ENCODE measurements at regions of chr1 and their contacts with region 1.

Region 1: GRCh38 chr1:16366722-16367257 is at the start of gene SZRD1:
- DNase-seq: peak; percentile 96 to 98 (median 97)
- ATAC-seq: peak; percentile 90 to 95 (median 93)
- H3K4me3 ChIP-seq: peak within 1 kb of the TSS; percentile 46 to 98 (median 80)
- H3K27ac ChIP-seq: peak within 1 kb of the TSS; percentile 83 to 100 (median 97)
- H3K4me1 ChIP-seq: peaks cover 0 to 67% (median 23%) of the 10 kb centered on the region in 12 donors
- H3K27me3 ChIP-seq: no peaks in the 10 kb centered on the region
- CTCF ChIP-seq: no peak
- POLR2A ChIP-seq: no peak
- total RNA-seq, gene SZRD1: 57.4 to 130 (median 94.4) TPM

Region 2: DNA sequence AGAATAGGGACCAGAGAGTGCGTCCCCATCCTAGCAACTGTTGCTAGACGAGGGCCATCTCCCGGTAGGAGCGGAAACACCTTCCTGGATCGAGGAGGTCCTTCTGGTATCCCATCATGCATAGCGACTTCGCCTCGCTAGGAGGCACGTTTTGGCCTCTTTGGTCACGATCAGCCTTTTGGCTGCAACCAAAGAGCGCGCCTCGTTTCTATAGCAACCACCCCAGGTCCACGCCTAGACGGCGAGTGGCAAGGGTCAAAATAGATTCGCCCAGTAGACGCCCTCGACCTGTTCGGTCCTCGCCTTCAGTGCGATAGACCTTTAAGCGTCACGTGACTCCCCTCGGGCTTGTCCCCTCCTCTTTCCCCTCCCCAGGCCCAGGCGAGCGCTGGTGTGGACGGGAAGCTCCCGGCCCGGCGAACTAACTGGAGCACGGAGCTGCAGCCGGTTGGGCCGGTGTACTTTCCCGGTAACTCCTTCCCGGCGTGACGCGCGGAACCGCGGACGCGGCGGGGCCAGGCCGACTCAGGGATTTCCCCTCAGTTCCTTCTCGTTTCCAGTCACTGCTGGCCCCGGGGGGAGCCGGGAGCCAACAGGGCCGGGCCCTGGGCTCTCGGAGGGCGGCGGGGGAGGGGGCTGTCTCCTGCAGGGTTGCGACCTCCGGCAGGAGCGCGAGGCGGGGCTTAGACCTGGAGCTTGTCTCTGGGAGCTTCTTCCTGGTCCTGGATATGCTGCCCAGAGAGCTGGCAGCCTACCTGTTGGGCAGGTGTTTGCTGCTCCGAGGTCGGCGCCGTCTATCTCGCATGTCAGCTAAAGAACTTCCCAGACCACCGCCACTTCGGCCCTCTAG is 840.1 kb before region 1 on chr1 and contains the start of gene DNAJC16:
- intact Hi-C with region 1: loop called in 1 of 10 experiments (anchors 5 kb)
- DNase-seq: peak; percentile 98 to 100 (median 100)
- ATAC-seq: peak; percentile 68 to 77 (median 73)
- H3K4me3 ChIP-seq: peak within 1 kb of the TSS; percentile 64 to 100 (median 76)
- H3K27ac ChIP-seq: peak within 1 kb of the TSS; percentile 68 to 99 (median 96)
- H3K4me1 ChIP-seq: peaks cover 8 to 43% (median 29%) of the 10 kb centered on the region in 12 donors
- H3K27me3 ChIP-seq: no peaks in the 10 kb centered on the region
- CTCF ChIP-seq: peak in 6 of 12 donors; percentile 6 to 45 (median 30)
- POLR2A ChIP-seq: peak in 1 of 2 donors; percentile 74
- total RNA-seq, gene DNAJC16: 11.9 to 22.8 (median 19.1) TPM

Region 3: GRCh38 chr1:16206547-16207317 is 160.1 kb before region 1 on chr1:
- intact Hi-C with region 1: loop called in 5 of 10 experiments (anchors 5 to 10 kb)
- DNase-seq: peak; percentile 97 to 99 (median 98)
- ATAC-seq: peak; percentile 93 to 97 (median 96)
- H3K4me3 ChIP-seq: peak overlapping the region; percentile 30 to 67 (median 63)
- H3K27ac ChIP-seq: peak overlapping the region; percentile 64 to 98 (median 93)
- H3K4me1 ChIP-seq: peaks cover 0 to 23% (median 13%) of the 10 kb centered on the region in 12 donors
- H3K27me3 ChIP-seq: no peaks in the 10 kb centered on the region
- CTCF ChIP-seq: no peak
- POLR2A ChIP-seq: peak in 1 of 2 donors; percentile 64

Region 4: GRCh38 chr1:16318555-16318954 is 48.2 kb before region 1 on chr1:
- intact Hi-C with region 1: no loop called
- DNase-seq: peak in 4 of 5 donors; percentile 18 to 55 (median 38)
- ATAC-seq: peak; percentile 48 to 91 (median 74)
- H3K4me3 ChIP-seq: no peak overlapping the region
- H3K27ac ChIP-seq: peak overlapping the region in 3 of 12 donors; percentile 1 to 43 (median 24)
- H3K4me1 ChIP-seq: peaks cover 0 to 60% (median 27%) of the 10 kb centered on the region in 12 donors
- H3K27me3 ChIP-seq: no peaks in the 10 kb centered on the region
- CTCF ChIP-seq: no peak
- POLR2A ChIP-seq: no peak

Region 5: DNA sequence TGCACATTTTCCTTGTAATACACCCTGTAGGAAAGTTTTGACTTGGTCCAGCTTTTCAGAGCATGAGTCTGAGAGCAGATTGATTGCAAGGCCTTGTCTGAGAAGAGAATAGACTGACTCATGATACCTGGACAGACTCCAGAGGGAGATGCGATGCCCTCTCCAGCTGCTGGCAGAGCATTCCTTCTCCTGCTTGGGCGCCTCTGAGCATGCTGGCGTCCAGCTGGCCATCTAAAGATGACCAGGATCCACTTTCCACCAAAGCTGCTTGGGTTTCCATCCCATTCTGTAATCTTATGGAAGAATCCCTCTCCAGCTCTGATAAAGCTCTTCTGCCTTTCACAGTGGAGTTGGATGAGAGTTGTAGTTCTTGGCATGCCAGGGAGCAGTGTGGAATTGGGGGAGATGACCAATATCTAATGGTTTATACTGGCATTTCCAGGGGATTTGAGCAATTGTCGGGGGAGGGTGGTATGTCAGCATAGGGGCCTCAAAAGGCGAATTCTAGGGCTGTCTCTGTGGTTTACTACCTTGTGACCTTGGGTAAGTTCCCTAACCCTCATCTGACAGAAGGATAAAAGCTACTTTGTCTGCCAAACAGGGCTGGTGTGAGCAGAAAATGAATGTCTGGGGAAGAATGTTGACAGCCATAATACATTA is 19.8 kb after region 1 on chr1:
- intact Hi-C with region 1: loop called in 1 of 10 experiments (anchors 1 kb)
- DNase-seq: peak in 1 of 5 donors; percentile 58
- ATAC-seq: peak; percentile 41 to 80 (median 68)
- H3K4me3 ChIP-seq: peak overlapping the region in 3 of 12 donors; percentile 41 to 47 (median 44)
- H3K27ac ChIP-seq: peak overlapping the region in 11 of 12 donors; percentile 14 to 81 (median 60)
- H3K4me1 ChIP-seq: peaks cover 0 to 76% (median 54%) of the 10 kb centered on the region in 12 donors
- H3K27me3 ChIP-seq: no peaks in the 10 kb centered on the region
- CTCF ChIP-seq: no peak
- POLR2A ChIP-seq: no peak

Region 6: GRCh38 chr1:16420424-16421118 is 53.8 kb after region 1 on chr1:
- intact Hi-C with region 1: no loop called
- DNase-seq: peak in 1 of 5 donors; percentile 33
- ATAC-seq: no peak
- H3K4me3 ChIP-seq: no peak overlapping the region
- H3K27ac ChIP-seq: peak overlapping the region in 1 of 12 donors; percentile 49
- H3K4me1 ChIP-seq: no peaks in the 10 kb centered on the region
- H3K27me3 ChIP-seq: peaks cover 0 to 5% (median 0%) of the 10 kb centered on the region in 9 donors
- CTCF ChIP-seq: no peak
- POLR2A ChIP-seq: no peak

Region 7: DNA sequence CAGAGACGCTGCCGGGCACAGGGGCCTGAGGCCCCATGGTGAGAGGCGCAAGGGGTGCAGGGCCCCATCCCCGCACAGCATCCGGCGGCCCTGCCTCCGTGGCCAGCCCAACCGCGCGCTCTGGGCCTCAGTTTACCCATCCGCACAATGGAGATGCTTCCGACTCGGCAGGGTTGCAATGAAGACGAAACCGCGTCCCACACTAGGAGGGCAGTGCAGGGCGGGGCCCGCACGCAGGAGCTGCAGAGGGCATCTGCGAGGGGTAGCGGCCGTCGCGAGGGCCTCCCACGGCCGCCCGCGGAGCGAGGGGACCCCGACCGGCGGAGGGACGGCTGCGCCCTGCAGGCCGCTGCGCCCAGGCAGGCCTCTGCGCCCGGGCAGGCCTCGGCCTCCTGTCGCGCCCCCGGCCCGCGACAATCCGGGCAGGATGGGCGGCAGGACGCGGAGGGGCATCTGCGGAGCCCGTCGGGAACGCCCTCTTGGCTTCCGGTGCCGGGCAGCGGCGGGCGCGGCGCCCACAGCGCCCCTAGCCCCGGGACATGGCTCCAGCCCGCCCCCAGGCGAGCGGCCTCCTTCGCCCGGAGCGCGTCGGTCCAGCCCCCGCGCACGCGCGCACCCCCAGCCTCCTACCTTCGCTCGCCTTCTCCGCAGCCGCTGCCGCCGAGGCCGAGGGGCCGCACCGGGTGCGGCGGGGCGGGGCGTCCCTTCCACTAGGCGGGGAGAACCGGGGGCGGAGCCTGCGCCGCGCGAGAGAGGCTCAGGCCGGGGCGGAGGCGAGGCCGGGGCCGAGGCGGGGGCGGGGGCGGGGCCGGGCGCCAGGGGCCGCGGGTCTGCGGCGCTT is 132.0 kb after region 1 on chr1:
- intact Hi-C with region 1: loop called in 2 of 10 experiments (anchors 5 to 10 kb)
- DNase-seq: peak; percentile 90 to 95 (median 93)
- ATAC-seq: peak; percentile 66 to 96 (median 94)
- H3K4me3 ChIP-seq: peak overlapping the region; percentile 69 to 94 (median 88)
- H3K27ac ChIP-seq: peak overlapping the region; percentile 51 to 90 (median 85)
- H3K4me1 ChIP-seq: peaks cover 0 to 23% (median 7%) of the 10 kb centered on the region in 12 donors
- H3K27me3 ChIP-seq: no peaks in the 10 kb centered on the region
- CTCF ChIP-seq: peak in 5 of 12 donors; percentile 22 to 44 (median 42)
- POLR2A ChIP-seq: peak in 1 of 2 donors; percentile 70

Region 8: GRCh38 chr1:16727190-16728111 is 360.7 kb after region 1 on chr1:
- intact Hi-C with region 1: no loop called
- DNase-seq: peak in 2 of 5 donors; percentile 33 to 75
- ATAC-seq: peak in 3 of 4 donors; percentile 26 to 66 (median 42)
- H3K4me3 ChIP-seq: no peak overlapping the region
- H3K27ac ChIP-seq: no peak overlapping the region
- H3K4me1 ChIP-seq: no peaks in the 10 kb centered on the region
- H3K27me3 ChIP-seq: peaks cover 5 to 44% (median 25%) of the 10 kb centered on the region in 9 donors
- CTCF ChIP-seq: no peak
- POLR2A ChIP-seq: no peak